B cell (primary cell): ENCODE measurements at regions of chr1 and their contacts with region 1.

Region 1: GRCh38 chr1:173420330-173420806 is 56.8 kb upstream of the PRDX6 start:
- DNase-seq: peak; percentile 84
- ATAC-seq: peak; percentile 36
- H3K4me3 ChIP-seq: no peak overlapping the region
- H3K4me3 Mint-ChIP-seq: peak overlapping the region; percentile 44
- H3K27ac ChIP-seq: no peak overlapping the region
- H3K27ac Mint-ChIP-seq: peak overlapping the region; percentile 77
- H3K4me1 ChIP-seq: peaks cover 35 to 44% of the 10 kb centered on the region in 2 donors
- H3K4me1 Mint-ChIP-seq: peaks cover 55% of the 10 kb centered on the region
- H3K27me3 ChIP-seq: no peaks in the 10 kb centered on the region
- H3K27me3 Mint-ChIP-seq: no peaks in the 10 kb centered on the region
- CTCF ChIP-seq: peak; percentile 94

Region 2: DNA sequence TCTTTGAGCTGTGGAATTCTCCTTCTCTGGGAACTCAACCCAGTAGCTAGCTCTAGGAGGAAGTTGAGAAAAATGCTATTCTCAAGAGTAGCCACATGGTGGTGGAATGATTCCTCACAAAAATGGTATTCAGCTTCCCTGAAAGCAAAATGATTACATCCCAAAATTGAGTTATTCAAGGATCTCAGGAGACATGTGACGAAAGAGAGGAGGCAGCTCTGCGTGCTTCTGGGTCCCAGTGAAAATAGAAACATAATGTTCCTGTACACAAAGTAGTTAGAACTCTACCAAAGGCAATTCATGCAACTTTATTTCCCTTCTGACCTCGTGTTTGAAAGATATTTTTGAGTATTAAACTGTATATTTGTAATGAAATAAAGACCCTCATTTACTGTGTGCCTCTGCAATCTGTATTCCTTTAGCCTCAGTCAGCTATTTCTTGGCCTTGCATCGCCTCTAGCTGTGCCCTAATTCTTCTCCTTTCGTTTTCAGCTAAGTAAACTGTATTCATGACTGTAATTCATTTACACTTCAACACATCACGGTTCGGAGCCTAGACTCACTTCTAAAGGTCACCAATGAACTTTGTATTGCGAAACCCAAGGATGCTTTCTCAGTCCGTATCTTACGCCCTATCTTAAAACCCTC is 594.1 kb before region 1 on chr1:
- CTCF ChIA-PET with region 1: interaction called, 17 read pairs
- POLR2A ChIA-PET with region 1: no interaction called
- intact Hi-C with region 1: no loop called
- DNase-seq: peak; percentile 43
- ATAC-seq: peak; percentile 62
- H3K4me3 ChIP-seq: peak overlapping the region in 1 of 5 experiments; percentile 13
- H3K4me3 Mint-ChIP-seq: no peak overlapping the region
- H3K27ac ChIP-seq: no peak overlapping the region
- H3K27ac Mint-ChIP-seq: no peak overlapping the region
- H3K4me1 ChIP-seq: peaks cover 9% of the 10 kb centered on the region in 2 donors
- H3K4me1 Mint-ChIP-seq: no peaks in the 10 kb centered on the region
- H3K27me3 ChIP-seq: no peaks in the 10 kb centered on the region
- H3K27me3 Mint-ChIP-seq: no peaks in the 10 kb centered on the region
- CTCF ChIP-seq: peak; percentile 63

Region 3: GRCh38 chr1:173212952-173213491 is 207.3 kb before region 1 on chr1:
- CTCF ChIA-PET with region 1: no interaction called
- POLR2A ChIA-PET with region 1: no interaction called
- intact Hi-C with region 1: no loop called
- DNase-seq: no peak
- ATAC-seq: no peak
- H3K4me3 ChIP-seq: no peak overlapping the region
- H3K4me3 Mint-ChIP-seq: no peak overlapping the region
- H3K27ac ChIP-seq: no peak overlapping the region
- H3K27ac Mint-ChIP-seq: no peak overlapping the region
- H3K4me1 ChIP-seq: no peaks in the 10 kb centered on the region
- H3K4me1 Mint-ChIP-seq: no peaks in the 10 kb centered on the region
- H3K27me3 ChIP-seq: no peaks in the 10 kb centered on the region
- H3K27me3 Mint-ChIP-seq: no peaks in the 10 kb centered on the region
- CTCF ChIP-seq: no peak

Region 4: GRCh38 chr1:173377266-173377665 is 43.1 kb before region 1 on chr1:
- CTCF ChIA-PET with region 1: no interaction called
- POLR2A ChIA-PET with region 1: no interaction called
- intact Hi-C with region 1: no loop called
- DNase-seq: no peak
- ATAC-seq: no peak
- H3K4me3 ChIP-seq: no peak overlapping the region
- H3K4me3 Mint-ChIP-seq: no peak overlapping the region
- H3K27ac ChIP-seq: no peak overlapping the region
- H3K27ac Mint-ChIP-seq: no peak overlapping the region
- H3K4me1 ChIP-seq: no peaks in the 10 kb centered on the region
- H3K4me1 Mint-ChIP-seq: no peaks in the 10 kb centered on the region
- H3K27me3 ChIP-seq: no peaks in the 10 kb centered on the region
- H3K27me3 Mint-ChIP-seq: no peaks in the 10 kb centered on the region
- CTCF ChIP-seq: no peak

Region 5: GRCh38 chr1:173409613-173410012 is 10.8 kb before region 1 on chr1:
- CTCF ChIA-PET with region 1: interaction called, 16 read pairs
- POLR2A ChIA-PET with region 1: interaction called, 4 read pairs
- intact Hi-C with region 1: no loop called
- DNase-seq: peak; percentile 73
- ATAC-seq: peak; percentile 22
- H3K4me3 ChIP-seq: no peak overlapping the region
- H3K4me3 Mint-ChIP-seq: peak overlapping the region; percentile 64
- H3K27ac ChIP-seq: peak overlapping the region; percentile 89 to 97
- H3K27ac Mint-ChIP-seq: peak overlapping the region; percentile 87
- H3K4me1 ChIP-seq: peaks cover 76 to 88% of the 10 kb centered on the region in 2 donors
- H3K4me1 Mint-ChIP-seq: peaks cover 79% of the 10 kb centered on the region
- H3K27me3 ChIP-seq: no peaks in the 10 kb centered on the region
- H3K27me3 Mint-ChIP-seq: no peaks in the 10 kb centered on the region
- CTCF ChIP-seq: no peak

Region 6: DNA sequence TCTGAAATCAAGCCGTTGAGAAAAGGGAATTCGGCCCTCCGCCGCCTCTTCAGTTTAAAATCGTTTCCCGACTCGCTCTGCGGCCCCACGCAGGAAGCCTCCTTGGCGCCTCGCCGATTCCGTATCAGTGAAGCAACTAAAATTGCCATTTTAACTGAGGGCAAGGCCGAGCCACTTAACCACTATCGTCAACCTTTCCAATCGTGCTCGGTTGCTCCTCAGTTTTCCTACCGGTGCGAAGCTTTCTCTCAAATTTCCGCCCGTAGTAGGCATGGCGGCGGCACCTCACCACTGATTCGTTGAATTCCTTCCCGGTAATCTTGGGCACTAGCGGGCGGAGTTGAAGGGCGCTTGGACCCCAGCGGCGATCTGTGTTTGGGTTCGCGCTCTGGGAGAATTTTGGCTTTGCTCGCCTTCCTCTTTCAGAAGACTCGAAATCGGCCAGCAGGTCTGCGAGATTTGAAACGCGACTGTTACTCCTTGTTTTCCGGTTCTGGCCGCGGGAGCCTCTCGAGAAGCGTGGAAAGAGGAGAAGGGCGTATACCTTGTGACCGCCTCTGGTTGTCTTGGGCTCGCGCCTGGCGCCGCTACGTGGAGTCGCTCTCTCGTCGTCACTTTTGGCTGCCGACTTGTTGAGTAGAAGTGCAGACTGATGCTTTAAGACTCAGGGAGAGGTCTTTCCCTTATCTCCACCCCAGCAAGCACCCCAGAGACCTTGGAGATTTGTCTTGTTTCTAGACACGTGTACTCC is 404.1 kb after region 1 on chr1 and contains the starts of genes CENPL and DARS2:
- CTCF ChIA-PET with region 1: interaction called, 38 read pairs
- POLR2A ChIA-PET with region 1: no interaction called
- intact Hi-C with region 1: loop called (anchors 1 kb)
- DNase-seq: peak; percentile 94
- ATAC-seq: peak; percentile 89
- H3K4me3 ChIP-seq: peak within 1 kb of the TSS; percentile 78 to 100 (median 93)
- H3K4me3 Mint-ChIP-seq: peak within 1 kb of the TSS; percentile 92
- H3K27ac ChIP-seq: peak within 1 kb of the TSS; percentile 77 to 87
- H3K27ac Mint-ChIP-seq: peak within 1 kb of the TSS; percentile 95
- H3K4me1 ChIP-seq: peaks cover 8 to 18% of the 10 kb centered on the region in 2 donors
- H3K4me1 Mint-ChIP-seq: peaks cover 21% of the 10 kb centered on the region
- H3K27me3 ChIP-seq: no peaks in the 10 kb centered on the region
- H3K27me3 Mint-ChIP-seq: no peaks in the 10 kb centered on the region
- CTCF ChIP-seq: no peak
- total RNA-seq, gene CENPL: 9.7 and 14.4 TPM in 2 replicates
- total RNA-seq, gene DARS2: 17.0 and 17.3 TPM in 2 replicates

Region 7: GRCh38 chr1:174217787-174218574 is 797.6 kb after region 1 on chr1:
- CTCF ChIA-PET with region 1: interaction called, 11 read pairs
- POLR2A ChIA-PET with region 1: no interaction called
- intact Hi-C with region 1: loop called (anchors 1 kb)
- DNase-seq: peak; percentile 71
- ATAC-seq: peak; percentile 71
- H3K4me3 ChIP-seq: no peak overlapping the region
- H3K4me3 Mint-ChIP-seq: no peak overlapping the region
- H3K27ac ChIP-seq: peak overlapping the region; percentile 48 to 67
- H3K27ac Mint-ChIP-seq: no peak overlapping the region
- H3K4me1 ChIP-seq: peaks cover 37 to 39% of the 10 kb centered on the region in 2 donors
- H3K4me1 Mint-ChIP-seq: peaks cover 40% of the 10 kb centered on the region
- H3K27me3 ChIP-seq: no peaks in the 10 kb centered on the region
- H3K27me3 Mint-ChIP-seq: no peaks in the 10 kb centered on the region
- CTCF ChIP-seq: peak; percentile 93